ENCODE measurements at regions of chr7 and their contacts with region 1.

Region 1: GRCh38 chr7:83976295-83976694 is 218.3 kb downstream of the SEMA3A start:
- DNase-seq: no peak
- ATAC-seq: peak in 1 of 2 donors; percentile 15

Region 2: GRCh38 chr7:84188786-84189405 is 212.6 kb after region 1 on chr7:
- intact Hi-C with region 1: loop called in 1 of 2 experiments (anchors 5 kb)
- DNase-seq: no peak
- ATAC-seq: no peak

Region 3: DNA sequence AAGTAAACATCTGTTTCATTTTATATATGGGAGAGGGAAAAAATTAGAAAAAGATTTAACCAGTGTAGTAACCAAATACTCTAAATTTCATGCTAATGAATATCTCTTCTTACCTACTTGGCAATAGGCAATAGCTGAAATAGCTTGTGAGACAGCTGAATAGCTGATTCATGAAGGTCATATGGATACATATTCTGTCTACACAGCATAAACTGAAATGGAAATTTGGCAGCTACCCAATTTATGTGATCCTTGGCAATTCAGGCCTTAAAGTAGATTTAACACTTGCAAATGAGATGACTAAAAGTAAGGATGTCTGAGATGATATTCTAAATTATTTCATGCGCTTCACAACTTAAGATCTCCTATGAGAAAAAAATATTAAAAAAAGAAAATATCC is 479.5 kb after region 1 on chr7:
- intact Hi-C with region 1: loop called in 1 of 2 experiments (anchors 10 kb)
- DNase-seq: no peak
- ATAC-seq: no peak

Region 4: GRCh38 chr7:85023045-85023712 is 1046.9 kb after region 1 on chr7:
- intact Hi-C with region 1: loop called in 1 of 2 experiments (anchors 1 kb)
- DNase-seq: no peak
- ATAC-seq: no peak

Measured in left cardiac atrium (tissue), 4 donors.